AG04450 (cell line): ENCODE measurements at regions of chr1 and their contacts with region 1.

Region 1: GRCh38 chr1:36638268-36638667 is 155.6 kb upstream of the CSF3R start:
- DNase-seq: no peak
- H3K4me3 ChIP-seq: no peak overlapping the region
- H3K27ac ChIP-seq: no peak overlapping the region
- H3K27me3 ChIP-seq: no peaks in the 10 kb centered on the region
- CTCF ChIP-seq: no peak

Region 2: DNA sequence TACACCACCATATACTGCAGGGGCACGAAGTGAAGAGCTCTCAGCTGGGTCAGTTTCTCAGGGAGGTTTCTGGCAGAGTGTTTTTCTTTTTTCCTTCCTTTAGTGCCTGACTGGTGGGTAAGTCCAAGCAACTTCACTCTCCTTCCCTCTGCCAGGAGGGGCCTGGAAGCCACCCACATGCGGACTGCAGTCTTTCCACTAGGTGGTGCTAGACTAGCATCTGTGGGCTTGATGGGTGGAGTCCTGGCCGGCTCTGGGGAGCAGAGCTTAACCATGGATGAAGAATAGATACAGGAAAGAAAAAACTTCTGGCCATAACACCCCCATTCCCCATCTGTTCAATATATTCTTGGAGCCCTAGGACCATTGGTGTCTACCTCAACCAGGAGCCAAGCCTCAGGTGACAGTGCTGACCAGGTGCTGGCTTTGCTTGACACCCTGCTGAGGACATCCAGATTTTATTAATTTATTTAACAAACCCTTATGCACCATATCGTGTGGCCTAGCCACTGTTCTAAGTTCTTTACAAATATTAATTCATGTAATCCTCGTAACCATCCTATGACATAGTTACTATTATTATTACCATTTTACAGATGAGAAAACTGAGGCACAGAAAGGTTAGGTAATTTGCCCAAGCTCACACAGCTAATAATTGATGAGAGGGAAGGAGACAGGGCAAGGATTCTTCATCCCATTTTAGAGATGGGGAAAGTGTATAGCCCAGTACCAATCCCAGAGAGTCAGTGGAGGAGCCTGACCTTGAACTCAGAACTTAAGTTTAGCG is 28.8 kb before region 1 on chr1:
- CTCF ChIA-PET with region 1: no interaction called
- POLR2A ChIA-PET with region 1: no interaction called
- DNase-seq: no peak
- H3K4me3 ChIP-seq: no peak overlapping the region
- H3K27ac ChIP-seq: no peak overlapping the region
- H3K27me3 ChIP-seq: peaks cover 2% of the 10 kb centered on the region
- CTCF ChIP-seq: peak; percentile 51

Region 3: DNA sequence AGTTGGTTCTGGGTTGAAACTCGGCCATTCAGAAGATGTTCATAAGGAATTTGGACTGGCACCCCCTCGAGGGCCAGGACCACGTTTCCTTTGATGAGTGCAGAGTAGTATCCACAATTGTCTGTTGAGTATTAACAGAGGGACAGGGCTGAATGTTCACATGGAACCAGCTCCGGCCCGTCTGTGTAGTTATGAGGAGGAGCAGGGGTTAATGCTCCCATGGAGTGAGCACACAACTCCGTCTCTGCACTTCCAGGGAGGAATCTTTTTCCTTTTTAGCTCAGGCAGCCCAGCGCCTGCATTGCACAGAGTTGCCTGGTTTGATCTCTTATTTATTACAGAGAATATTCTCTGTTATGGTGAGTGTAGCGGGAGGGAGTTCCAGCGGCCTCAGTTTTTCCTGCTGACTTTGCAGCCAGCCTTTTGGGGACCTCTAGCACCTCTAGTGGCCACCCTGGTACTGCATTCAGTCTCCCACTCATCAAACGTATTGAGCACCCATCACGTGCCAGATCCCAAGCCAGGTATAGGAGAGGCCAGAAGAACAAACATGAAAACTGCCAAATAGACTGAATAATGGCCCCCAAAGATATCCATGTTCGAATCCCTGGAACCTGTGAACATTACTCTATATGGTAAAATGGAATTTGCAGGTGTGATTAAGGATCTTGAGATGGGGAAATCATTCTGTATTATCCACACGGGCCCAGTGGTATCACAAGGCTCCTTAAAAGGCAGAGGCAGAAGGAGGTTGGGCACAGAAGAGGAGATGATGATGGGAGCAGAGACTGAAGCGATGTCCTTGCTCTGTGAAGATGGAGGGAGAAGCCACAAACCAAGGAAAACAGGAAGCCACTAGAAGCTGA is 12.2 kb after region 1 on chr1:
- CTCF ChIA-PET with region 1: interaction called, 14 read pairs
- POLR2A ChIA-PET with region 1: no interaction called
- DNase-seq: peak; percentile 1
- H3K4me3 ChIP-seq: no peak overlapping the region
- H3K27ac ChIP-seq: no peak overlapping the region
- H3K27me3 ChIP-seq: peaks cover 7% of the 10 kb centered on the region
- CTCF ChIP-seq: peak; percentile 93

Region 4: DNA sequence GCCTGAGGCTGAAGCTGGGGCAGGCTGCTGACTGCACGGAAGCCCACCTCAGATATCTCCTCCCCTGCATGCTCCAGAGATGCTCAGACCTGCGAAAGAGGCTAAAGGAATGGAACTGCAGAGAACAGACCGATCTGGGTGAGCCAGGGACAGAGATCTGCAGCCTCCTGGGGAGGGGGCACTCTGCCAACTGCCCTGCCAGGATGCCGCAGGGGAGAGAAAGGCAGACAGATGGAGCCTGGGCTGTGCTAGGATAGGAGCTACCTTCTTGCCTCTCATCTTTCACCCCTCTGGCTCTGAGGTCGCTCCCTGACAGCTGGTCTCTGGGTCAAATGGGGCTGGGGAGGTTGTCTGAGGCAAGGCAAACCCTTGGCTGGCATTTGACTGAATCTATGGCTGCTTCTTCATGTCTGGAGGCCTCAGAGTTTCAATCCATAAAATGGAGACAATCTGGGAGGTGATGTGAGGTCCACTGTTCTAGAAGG is 157.9 kb after region 1 on chr1:
- CTCF ChIA-PET with region 1: no interaction called
- POLR2A ChIA-PET with region 1: no interaction called
- DNase-seq: no peak
- H3K4me3 ChIP-seq: no peak overlapping the region
- H3K27ac ChIP-seq: no peak overlapping the region
- H3K27me3 ChIP-seq: no peaks in the 10 kb centered on the region
- CTCF ChIP-seq: no peak